Dorsolateral prefrontal cortex (tissue), 120 donors: ENCODE measurements at regions of chr10 and their contacts with region 1.

Region 1: DNA sequence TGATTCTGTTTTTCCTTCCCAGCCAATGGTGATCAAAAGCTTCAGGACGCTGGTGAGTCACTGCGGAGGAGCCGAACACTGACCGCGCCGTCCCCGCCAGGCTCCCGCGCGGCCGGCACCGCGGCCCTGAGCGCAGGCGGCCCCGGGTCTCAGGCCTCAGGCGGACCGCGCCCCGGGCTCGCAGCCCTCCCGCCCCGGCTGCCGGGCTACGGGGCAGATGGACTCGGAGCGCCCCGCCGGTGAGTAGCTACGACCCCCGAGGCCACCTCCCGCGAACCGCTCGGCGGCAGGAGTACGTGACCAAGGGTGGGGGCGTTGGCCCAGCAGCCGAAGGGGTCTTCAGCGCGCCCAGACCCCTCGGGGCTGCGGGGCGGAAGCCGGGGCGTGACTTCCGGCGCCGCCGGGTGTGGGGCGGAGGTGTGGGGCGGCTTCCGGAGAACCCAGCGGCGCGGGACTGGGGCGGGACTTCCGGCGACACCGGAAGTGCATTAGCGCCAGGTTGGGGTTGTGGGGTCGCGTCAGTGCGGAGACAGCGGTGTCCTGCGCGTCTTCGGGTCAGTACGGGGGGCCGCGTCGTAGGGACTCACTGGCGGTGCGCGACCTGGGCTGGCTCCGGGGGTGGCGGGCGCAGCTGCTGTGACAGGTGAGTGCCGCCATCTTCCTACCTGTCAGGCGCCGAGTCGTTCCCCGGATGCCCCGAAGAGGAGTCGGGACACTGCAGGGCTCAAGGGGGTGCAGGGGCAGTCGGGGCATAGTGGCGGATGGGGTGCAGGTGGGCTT is at the start of gene WDR37:
- DNase-seq: peak; percentile 76 to 93 (median 86)
- H3K4me3 ChIP-seq: peak within 1 kb of the TSS; percentile 68 to 99 (median 95)
- H3K27ac ChIP-seq: peak within 1 kb of the TSS; percentile 83 to 100 (median 97)
- H3K27me3 ChIP-seq: no peaks in the 10 kb centered on the region
- CTCF ChIP-seq: peak in 13 of 56 donors; percentile 6 to 36 (median 18)
- total RNA-seq, gene WDR37: 39.0 to 104 (median 78.6) TPM

Region 2: DNA sequence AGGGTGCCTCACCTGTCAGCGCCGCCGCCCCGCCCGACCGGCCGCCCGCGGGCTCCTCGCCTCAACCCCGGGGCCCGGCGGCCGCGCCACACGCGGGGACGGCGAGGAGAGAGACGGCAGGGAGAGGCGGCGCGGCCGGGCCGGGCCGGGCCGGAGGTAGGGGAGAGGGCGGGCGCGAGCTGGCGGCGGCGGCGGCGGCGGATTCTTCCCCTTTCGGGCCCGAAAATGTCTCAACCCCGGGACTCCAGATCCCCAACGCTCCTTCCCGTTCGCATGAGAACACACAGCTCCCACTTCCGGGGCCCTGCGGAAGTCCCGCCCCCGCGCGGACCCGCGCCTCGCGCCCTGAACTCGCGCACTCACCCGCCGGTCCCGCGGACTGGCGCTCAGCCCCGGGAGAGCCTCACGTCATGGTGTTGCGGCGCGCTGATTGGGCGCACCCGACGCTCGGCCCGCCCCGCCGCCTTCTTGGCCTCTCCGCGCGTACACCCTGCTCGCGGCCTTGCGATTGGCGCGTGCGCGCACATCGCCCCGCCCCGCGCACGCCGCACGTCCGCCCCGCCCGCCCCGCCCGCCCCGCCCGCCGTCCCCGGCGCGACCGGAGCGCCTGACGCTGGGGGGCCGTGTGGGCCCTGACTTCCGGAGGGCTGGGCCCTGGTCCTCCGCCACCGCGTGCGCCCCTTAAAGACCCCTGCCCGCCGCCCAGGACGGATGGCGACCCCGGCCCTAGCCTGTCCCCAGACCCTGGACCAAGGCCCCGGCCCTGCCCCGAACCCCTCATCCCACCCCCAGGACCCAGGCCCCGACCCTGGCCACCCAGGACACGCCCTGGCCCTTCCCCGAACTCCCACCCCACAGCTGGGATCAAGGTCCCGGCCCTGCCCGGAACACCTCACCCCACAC is 124.8 kb before region 1 on chr10 and contains the start of gene LARP4B:
- intact Hi-C with region 1: loop called (anchors 2 to 5 kb)
- DNase-seq: peak; percentile 95 to 99 (median 96)
- H3K4me3 ChIP-seq: peak within 1 kb of the TSS; percentile 46 to 89 (median 72)
- H3K27ac ChIP-seq: peak within 1 kb of the TSS in 57 of 59 donors; percentile 69 to 98 (median 92)
- H3K27me3 ChIP-seq: no peaks in the 10 kb centered on the region
- CTCF ChIP-seq: peak in 9 of 56 donors; percentile 12 to 34 (median 22)
- total RNA-seq, gene LARP4B: 62.8 to 97.1 (median 83.4) TPM